ENCODE measurements at regions of chr2 and their contacts with region 1.

Region 1: DNA sequence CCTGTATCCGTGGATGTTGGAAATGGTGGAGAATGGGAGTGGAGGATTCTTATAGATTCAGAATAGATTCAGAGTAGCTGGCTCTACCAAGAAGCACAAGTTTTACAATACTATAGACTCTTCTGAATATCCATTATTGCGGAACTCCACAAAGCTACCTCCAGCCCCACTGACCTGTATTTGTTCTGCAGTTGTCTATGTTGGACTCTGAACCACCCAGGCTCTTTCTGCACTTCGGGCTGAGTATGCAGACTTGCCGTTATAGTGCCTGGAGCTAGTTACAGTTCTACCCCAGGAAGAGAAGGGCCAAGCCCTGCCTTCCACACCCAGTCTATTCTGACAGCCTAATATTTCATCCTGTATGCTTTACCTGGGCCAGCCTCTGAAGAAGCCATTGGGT is 4.4 kb upstream of the RGPD4 start:
- DNase-seq: no peak
- H3K4me3 ChIP-seq: no peak overlapping the region
- H3K27ac ChIP-seq: no peak overlapping the region
- H3K4me1 ChIP-seq: no peaks in the 10 kb centered on the region
- H3K27me3 ChIP-seq: no peaks in the 10 kb centered on the region
- CTCF ChIP-seq: no peak

Region 2: GRCh38 chr2:107760620-107761364 is 61.5 kb before region 1 on chr2:
- CTCF ChIA-PET with region 1: interaction called, 11 read pairs
- POLR2A ChIA-PET with region 1: no interaction called
- intact Hi-C with region 1: no loop called
- DNase-seq: no peak
- H3K4me3 ChIP-seq: no peak overlapping the region
- H3K27ac ChIP-seq: no peak overlapping the region
- H3K4me1 ChIP-seq: no peaks in the 10 kb centered on the region
- H3K27me3 ChIP-seq: no peaks in the 10 kb centered on the region
- CTCF ChIP-seq: no peak

Region 3: DNA sequence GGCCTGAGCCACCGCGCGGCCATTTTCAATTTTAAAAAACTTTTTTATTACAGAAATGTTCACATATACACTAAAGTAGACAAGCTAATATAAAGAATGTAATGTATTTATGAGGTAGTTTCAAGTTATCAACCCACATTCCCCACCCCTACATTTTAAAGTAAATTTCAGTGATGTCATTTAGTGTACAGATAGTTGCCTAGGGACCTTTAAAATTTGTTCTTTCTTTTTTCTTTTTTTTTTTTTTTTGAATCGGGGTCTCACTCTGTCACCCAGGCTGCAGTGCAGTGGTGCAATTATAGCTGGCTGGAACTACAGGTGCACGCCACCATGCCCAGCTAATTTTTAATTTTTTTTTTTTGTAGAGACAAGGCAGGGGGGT is 709.4 kb after region 1 on chr2:
- CTCF ChIA-PET with region 1: no interaction called
- POLR2A ChIA-PET with region 1: no interaction called
- intact Hi-C with region 1: no loop called
- DNase-seq: no peak
- H3K4me3 ChIP-seq: no peak overlapping the region
- H3K27ac ChIP-seq: no peak overlapping the region
- H3K4me1 ChIP-seq: peaks cover 8% of the 10 kb centered on the region
- H3K27me3 ChIP-seq: no peaks in the 10 kb centered on the region
- CTCF ChIP-seq: no peak

Measured in A673 (cell line).